Pancreas (tissue), 10 donors: ENCODE measurements at regions of chr5 and their contacts with region 1.

Region 1: DNA sequence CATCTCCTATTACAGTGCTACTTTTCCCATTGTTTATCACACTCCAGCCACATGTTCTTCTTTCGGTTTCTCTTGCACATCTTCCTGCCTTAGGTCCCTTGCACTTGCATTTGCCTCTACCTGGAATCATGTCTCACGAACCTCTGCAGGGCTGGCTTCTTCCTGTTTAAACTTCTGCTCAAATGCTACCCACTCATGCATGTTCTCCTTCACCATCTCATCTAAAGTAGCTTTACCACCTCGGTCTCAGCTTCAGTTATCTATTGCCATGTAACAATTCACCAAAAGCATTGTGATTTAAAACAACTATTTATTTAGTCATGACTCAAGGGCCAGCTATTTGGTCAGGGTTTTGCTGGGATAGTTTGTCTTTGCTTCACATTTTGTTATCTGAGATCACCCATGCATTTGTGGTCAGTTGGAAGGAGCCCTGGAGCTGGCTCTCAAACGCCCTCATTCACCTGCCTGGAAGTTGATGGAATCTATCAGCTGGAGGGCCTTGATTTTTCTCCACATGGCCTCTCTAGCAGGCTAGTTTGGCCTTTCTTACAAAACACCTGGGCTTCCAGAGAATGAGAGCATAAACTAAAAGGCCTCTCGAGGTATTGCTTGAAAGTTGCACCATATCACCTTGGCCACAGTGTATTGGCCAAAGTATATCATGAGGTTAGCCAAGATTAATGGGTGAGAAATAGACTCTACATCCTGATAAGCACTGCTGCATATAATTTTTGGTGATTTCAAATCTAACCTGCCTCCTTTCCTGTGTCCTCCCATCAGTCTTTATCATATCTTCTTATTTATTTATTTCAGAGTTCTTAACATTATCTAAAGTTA is 21.4 kb downstream of the SPINK1 start:
- DNase-seq: no peak
- ATAC-seq: peak in 2 of 4 donors; percentile 26 to 27
- H3K4me3 ChIP-seq: no peak overlapping the region
- H3K27ac ChIP-seq: no peak overlapping the region
- H3K4me1 ChIP-seq: no peaks in the 10 kb centered on the region
- H3K27me3 ChIP-seq: no peaks in the 10 kb centered on the region
- CTCF ChIP-seq: no peak

Region 2: DNA sequence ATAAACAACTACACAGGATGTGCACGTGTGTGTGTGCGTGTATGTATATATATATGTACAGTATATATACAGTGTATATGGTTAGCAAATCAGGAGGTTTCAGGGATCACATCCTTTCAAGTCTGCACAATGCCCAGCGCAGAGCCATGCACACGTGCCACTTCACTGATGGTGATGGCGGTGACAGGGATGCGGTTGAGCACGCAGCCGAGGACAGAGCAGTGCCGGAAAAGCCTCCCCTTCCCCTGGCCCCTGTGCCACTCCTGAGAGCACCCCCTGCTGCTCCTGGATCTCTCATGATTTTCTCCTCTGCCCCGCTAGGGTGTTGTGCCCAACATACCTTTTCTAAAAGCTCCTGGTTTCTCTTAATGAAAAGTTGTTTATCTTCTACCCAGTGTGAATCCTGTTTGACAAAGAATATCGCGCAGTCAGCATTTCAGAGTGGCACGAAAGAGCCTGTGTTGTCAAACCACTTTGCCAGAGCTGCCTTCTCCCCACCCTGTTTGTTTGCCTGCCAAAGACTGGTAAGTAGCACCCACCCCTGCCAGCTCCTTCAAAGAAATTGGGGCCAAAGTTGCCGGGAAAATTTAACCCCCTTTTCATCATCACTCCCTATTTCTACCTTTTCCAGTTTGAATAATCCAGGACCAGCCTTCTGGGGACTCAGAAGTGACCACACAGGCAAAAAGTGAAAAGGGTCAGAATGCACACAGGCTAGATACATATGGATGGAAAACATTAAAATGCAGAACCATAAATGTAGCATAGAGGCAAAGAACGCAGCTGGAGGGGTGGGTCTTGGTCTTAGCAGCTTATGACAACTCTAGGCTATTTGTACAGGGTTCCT is 173.9 kb before region 1 on chr5:
- intact Hi-C with region 1: loop called in 1 of 3 experiments (anchors 10 kb)
- DNase-seq: no peak
- ATAC-seq: peak in 2 of 4 donors; percentile 31 to 45
- H3K4me3 ChIP-seq: no peak overlapping the region
- H3K27ac ChIP-seq: no peak overlapping the region
- H3K4me1 ChIP-seq: peaks cover 0 to 10% (median 0%) of the 10 kb centered on the region in 3 donors
- H3K27me3 ChIP-seq: no peaks in the 10 kb centered on the region
- CTCF ChIP-seq: no peak